Endothelial cell of umbilical vein (primary cell): ENCODE measurements at regions of chr10 and their contacts with region 1.

Region 1: DNA sequence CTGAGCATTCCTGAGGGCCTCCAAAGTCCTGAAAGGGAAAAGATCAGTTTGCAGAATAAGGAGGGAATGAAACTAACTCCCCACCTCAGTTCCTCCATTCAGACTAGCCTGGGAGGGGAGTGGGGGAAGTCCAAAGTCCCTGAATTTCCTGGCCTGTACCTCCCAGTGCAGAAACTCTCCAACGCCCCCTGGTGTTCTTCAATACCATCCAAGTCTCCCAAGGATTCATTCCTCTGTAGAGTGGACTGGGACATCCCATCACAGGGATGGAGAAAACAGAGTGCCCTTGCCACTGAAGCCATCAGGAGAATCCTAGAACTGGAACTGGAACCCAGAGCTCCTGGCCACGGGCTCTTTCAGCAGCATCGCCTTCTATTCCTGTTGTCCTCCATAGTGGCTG is 1.6 kb upstream of the COL13A1 start:
- DNase-seq: peak; percentile 56
- H3K4me3 ChIP-seq: no peak overlapping the region
- H3K27ac ChIP-seq: no peak overlapping the region
- H3K4me1 ChIP-seq: peaks cover 20% of the 10 kb centered on the region
- H3K27me3 ChIP-seq: peaks cover 13 to 23% of the 10 kb centered on the region in 2 experiments
- CTCF ChIP-seq: peak; percentile 77 to 79
- POLR2A ChIP-seq: no peak

Region 2: GRCh38 chr10:69696073-69696731 is 103.9 kb before region 1 on chr10:
- CTCF ChIA-PET with region 1: interaction called, 5 read pairs
- POLR2A ChIA-PET with region 1: no interaction called
- dilution Hi-C with region 1: no loop called
- intact Hi-C with region 1: loop called (anchors 1 kb)
- DNase-seq: peak; percentile 70
- H3K4me3 ChIP-seq: no peak overlapping the region
- H3K27ac ChIP-seq: no peak overlapping the region
- H3K4me1 ChIP-seq: peaks cover 2% of the 10 kb centered on the region
- H3K27me3 ChIP-seq: peaks cover 9 to 15% of the 10 kb centered on the region in 2 experiments
- CTCF ChIP-seq: peak; percentile 56 to 60
- POLR2A ChIP-seq: no peak

Region 3: DNA sequence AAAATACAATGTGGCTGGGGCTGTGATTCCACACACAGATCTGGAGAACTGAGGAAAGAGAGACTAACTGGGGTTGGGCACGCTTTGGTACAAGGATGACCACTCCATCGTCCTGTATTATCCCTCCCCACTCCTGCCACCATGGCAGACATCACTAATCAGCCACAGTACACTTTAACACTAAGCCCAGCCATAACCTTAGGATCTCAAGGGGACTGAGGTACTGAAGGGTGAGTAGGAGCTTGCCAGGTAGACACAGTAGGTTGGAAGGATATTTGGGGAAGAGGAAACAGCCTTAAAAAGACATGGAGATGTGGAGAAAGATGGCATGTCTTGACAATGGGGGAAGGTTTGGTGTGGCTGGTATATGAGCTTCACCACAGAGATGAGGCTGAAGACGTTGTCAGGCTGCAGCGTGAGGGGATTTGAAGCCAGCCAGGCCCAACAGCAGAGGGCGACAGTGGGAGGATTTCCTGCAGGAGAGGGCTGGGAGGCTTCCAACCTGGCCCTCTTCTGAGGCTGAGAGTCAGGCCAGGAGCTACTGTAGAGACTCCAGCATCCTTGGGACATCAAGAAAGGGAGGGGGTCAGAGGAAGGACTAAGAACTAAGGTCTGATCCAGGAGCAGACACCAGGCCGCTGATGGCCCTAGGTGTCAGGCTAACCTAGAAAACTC is 57.0 kb before region 1 on chr10:
- CTCF ChIA-PET with region 1: interaction called, 15 read pairs
- POLR2A ChIA-PET with region 1: no interaction called
- dilution Hi-C with region 1: no loop called
- intact Hi-C with region 1: loop called (anchors 1 kb)
- DNase-seq: peak; percentile 29
- H3K4me3 ChIP-seq: no peak overlapping the region
- H3K27ac ChIP-seq: no peak overlapping the region
- H3K4me1 ChIP-seq: no peaks in the 10 kb centered on the region
- H3K27me3 ChIP-seq: peaks cover 14% of the 10 kb centered on the region in 2 experiments
- CTCF ChIP-seq: peak; percentile 58 to 64
- POLR2A ChIP-seq: no peak

Region 4: GRCh38 chr10:69819716-69820506 is 19.8 kb after region 1 on chr10:
- CTCF ChIA-PET with region 1: interaction called, 21 read pairs
- POLR2A ChIA-PET with region 1: no interaction called
- dilution Hi-C with region 1: no loop called
- intact Hi-C with region 1: no loop called
- DNase-seq: peak; percentile 71
- H3K4me3 ChIP-seq: no peak overlapping the region
- H3K27ac ChIP-seq: peak overlapping the region; percentile 87
- H3K4me1 ChIP-seq: peaks cover 37% of the 10 kb centered on the region
- H3K27me3 ChIP-seq: no peaks in the 10 kb centered on the region
- CTCF ChIP-seq: no peak
- POLR2A ChIP-seq: no peak

Region 5: GRCh38 chr10:69839696-69840345 is 39.7 kb after region 1 on chr10:
- CTCF ChIA-PET with region 1: interaction called, 36 read pairs
- POLR2A ChIA-PET with region 1: interaction called, 4 read pairs
- dilution Hi-C with region 1: no loop called
- intact Hi-C with region 1: loop called (anchors 5 kb)
- DNase-seq: no peak
- H3K4me3 ChIP-seq: no peak overlapping the region
- H3K27ac ChIP-seq: peak overlapping the region; percentile 6
- H3K4me1 ChIP-seq: peaks cover 43% of the 10 kb centered on the region
- H3K27me3 ChIP-seq: no peaks in the 10 kb centered on the region
- CTCF ChIP-seq: no peak
- POLR2A ChIP-seq: no peak

Region 6: GRCh38 chr10:69851306-69851705 is 51.2 kb after region 1 on chr10:
- CTCF ChIA-PET with region 1: interaction called, 12 read pairs
- POLR2A ChIA-PET with region 1: no interaction called
- dilution Hi-C with region 1: no loop called
- intact Hi-C with region 1: loop called (anchors 5 kb)
- DNase-seq: no peak
- H3K4me3 ChIP-seq: no peak overlapping the region
- H3K27ac ChIP-seq: no peak overlapping the region
- H3K4me1 ChIP-seq: peaks cover 22% of the 10 kb centered on the region
- H3K27me3 ChIP-seq: no peaks in the 10 kb centered on the region
- CTCF ChIP-seq: no peak
- POLR2A ChIP-seq: no peak

Region 7: DNA sequence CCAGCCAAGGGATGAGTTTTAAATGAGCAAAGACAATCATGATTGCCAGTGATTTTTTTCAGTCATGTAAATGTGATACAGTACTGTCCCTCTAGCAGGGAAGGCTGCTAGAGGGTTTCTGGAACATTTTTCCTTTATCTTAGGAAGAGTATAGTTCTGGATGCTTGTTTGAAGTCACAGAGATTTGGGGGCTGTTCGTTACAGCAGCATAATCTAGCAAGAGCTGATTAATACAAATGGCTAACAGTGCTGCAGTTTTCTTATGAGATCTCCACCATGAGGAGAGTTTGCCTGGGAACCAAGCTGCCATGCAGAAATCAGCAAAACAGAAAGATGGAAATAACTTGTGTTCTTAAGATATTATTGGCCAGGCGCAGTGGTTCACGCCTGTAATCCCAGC is 441.0 kb after region 1 on chr10:
- CTCF ChIA-PET with region 1: no interaction called
- POLR2A ChIA-PET with region 1: no interaction called
- dilution Hi-C with region 1: no loop called
- intact Hi-C with region 1: no loop called
- DNase-seq: no peak
- H3K4me3 ChIP-seq: no peak overlapping the region
- H3K27ac ChIP-seq: no peak overlapping the region
- H3K4me1 ChIP-seq: no peaks in the 10 kb centered on the region
- H3K27me3 ChIP-seq: peaks cover 23 to 35% of the 10 kb centered on the region in 2 experiments
- CTCF ChIP-seq: no peak
- POLR2A ChIP-seq: no peak

Region 8: DNA sequence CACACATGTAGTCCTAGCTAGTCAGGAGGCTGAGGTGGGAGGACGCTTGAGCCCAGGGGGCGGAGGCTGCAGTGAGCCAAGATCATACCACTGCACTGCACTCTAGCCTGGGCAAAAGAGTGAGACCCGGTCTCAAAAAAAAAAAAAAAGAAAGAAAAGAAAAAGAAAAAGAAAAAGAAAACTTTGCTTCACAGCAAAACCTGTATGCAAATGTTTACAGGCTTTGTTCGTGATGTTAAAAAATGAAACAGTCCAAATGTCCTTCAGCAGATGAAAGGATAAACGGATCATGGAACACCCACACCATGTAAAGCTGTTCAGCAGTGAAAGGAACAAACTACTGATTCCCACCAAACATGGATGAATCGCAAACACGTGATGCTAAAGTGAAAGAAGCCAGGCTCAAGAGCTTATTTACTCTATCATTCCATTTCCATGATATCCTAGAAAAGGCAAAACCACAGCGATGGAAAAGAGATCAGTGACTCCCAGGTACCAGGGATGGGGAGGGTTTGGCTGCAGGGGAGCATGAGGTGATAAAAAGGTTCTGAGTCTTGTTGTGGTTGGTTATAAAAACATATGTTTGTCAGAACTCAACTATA is 567.2 kb after region 1 on chr10:
- CTCF ChIA-PET with region 1: no interaction called
- POLR2A ChIA-PET with region 1: no interaction called
- dilution Hi-C with region 1: no loop called
- intact Hi-C with region 1: no loop called
- DNase-seq: no peak
- H3K4me3 ChIP-seq: no peak overlapping the region
- H3K27ac ChIP-seq: no peak overlapping the region
- H3K4me1 ChIP-seq: no peaks in the 10 kb centered on the region
- H3K27me3 ChIP-seq: no peaks in the 10 kb centered on the region
- CTCF ChIP-seq: no peak
- POLR2A ChIP-seq: no peak